Heart right ventricle (tissue), 16 donors: ENCODE measurements at regions of chr20 and their contacts with region 1.

Region 1: DNA sequence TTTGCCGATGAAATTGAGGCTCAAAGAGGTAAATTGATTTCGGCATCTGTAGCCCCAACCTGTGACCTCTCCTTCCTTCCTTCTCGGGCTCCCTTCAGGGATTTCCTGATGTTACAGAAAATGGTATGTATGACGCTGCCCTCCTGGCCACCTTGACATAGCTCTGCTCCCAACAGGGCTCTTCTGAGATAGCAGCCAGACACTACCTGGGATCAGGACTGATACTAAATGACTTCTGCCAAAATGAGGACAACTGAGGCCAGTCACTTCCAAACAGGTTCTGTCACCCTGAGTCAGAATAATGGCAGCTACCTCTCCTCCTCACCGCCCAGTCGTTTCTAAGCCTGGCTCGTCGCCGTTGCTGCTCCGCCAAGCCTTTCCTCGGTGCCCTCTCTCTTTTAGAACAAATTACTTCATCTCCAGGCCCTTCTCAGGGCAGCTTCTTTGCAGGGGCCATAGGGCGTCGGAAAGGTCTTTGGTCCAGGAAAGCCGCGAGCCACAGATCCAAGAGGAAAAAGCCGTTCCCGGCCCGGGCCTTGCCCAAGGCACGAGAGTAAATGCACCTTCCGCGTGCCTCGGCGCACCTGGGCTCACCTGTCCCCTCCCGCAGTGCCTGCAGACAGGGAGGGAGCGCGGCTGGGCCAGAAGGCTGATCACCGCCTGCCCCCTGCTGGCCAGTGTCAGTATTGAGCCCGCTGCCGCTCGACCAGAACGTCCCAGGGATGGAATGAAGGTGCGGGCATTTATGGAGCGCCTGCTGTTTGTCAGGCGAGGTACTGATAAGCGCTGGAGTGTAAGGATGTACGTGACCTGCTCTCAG is 904 bp upstream of the LPIN3 start:
- DNase-seq: peak; percentile 85 to 86
- ATAC-seq: peak; percentile 69 to 89 (median 84)
- H3K4me3 ChIP-seq: peak overlapping the region in 9 of 10 donors; percentile 36 to 67 (median 59)
- H3K27ac ChIP-seq: peak overlapping the region; percentile 40 to 86 (median 80)
- H3K4me1 ChIP-seq: peaks cover 3 to 48% (median 25%) of the 10 kb centered on the region in 9 donors
- H3K27me3 ChIP-seq: peaks cover 0 to 11% (median 0%) of the 10 kb centered on the region in 7 donors
- CTCF ChIP-seq: peak; percentile 98 to 100 (median 99)

Region 2: GRCh38 chr20:40970201-40970600 is 369.5 kb before region 1 on chr20:
- intact Hi-C with region 1: loop called in 6 of 10 experiments (anchors 5 to 10 kb)
- DNase-seq: no peak
- ATAC-seq: no peak
- H3K4me3 ChIP-seq: no peak overlapping the region
- H3K27ac ChIP-seq: no peak overlapping the region
- H3K4me1 ChIP-seq: peaks cover 0 to 10% (median 0%) of the 10 kb centered on the region in 9 donors
- H3K27me3 ChIP-seq: peaks cover 0 to 23% (median 0%) of the 10 kb centered on the region in 7 donors
- CTCF ChIP-seq: no peak

Region 3: GRCh38 chr20:41136680-41137613 is 202.8 kb before region 1 on chr20 and contains the start of gene PLCG1:
- intact Hi-C with region 1: loop called in 6 of 10 experiments (anchors 2 to 10 kb)
- DNase-seq: peak; percentile 91 to 93
- ATAC-seq: peak; percentile 83 to 90 (median 86)
- H3K4me3 ChIP-seq: peak within 1 kb of the TSS; percentile 71 to 99 (median 94)
- H3K27ac ChIP-seq: peak within 1 kb of the TSS; percentile 90 to 100 (median 98)
- H3K4me1 ChIP-seq: peaks cover 21 to 58% (median 50%) of the 10 kb centered on the region in 9 donors
- H3K27me3 ChIP-seq: peaks cover 0 to 9% (median 0%) of the 10 kb centered on the region in 7 donors
- CTCF ChIP-seq: no peak
- total RNA-seq, gene PLCG1: 36.6 to 63.6 (median 47.9) TPM

Region 4: DNA sequence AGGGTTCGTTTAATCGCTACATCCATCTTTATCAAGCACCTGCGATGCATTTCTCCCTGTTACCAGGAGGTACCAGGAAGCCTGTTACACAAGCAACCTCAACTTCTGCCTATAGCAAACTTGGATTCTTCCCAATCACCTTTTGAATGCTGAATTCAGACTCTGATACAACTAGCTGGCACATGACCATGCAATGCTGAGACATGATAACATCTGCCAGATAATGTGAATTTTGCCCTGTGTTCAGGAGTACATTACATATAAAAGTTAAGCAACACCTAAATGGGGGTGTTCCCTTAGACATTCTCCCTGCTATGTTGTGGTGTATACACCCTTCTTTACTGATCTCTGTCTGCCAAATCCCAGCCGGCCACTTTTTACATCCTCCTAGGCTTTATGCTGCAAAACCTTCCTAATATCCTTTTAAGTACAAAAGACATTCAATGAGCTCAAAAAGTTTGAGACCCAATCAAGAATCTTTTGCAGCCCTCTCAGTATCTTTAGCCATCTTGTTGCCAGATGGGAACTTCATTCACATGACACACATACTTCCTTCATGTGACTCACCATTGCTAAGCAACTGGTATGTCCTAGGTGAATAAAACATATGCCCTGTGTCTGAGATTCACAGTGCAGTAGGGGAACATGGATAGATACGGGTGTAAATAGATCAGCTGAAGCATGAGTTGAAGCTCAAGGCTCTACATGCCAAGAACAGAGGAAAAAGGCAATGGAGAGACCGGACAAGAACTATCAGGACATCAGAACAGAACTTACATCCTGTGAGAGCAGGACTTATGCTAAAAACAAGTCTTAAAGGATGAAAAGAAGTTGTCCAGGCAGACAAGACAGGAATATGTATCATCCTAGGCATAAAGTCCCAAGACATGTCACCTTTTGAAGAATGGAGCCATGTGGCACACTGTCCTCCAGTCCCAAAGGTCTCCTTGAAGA is 106.5 kb before region 1 on chr20:
- intact Hi-C with region 1: loop called in 9 of 10 experiments (anchors 1 to 10 kb)
- DNase-seq: no peak
- ATAC-seq: peak; percentile 32 to 70 (median 55)
- H3K4me3 ChIP-seq: peak overlapping the region in 2 of 10 donors; percentile 26 to 34
- H3K27ac ChIP-seq: peak overlapping the region; percentile 63 to 88 (median 82)
- H3K4me1 ChIP-seq: peaks cover 24 to 74% (median 69%) of the 10 kb centered on the region in 9 donors
- H3K27me3 ChIP-seq: no peaks in the 10 kb centered on the region
- CTCF ChIP-seq: no peak

Region 5: GRCh38 chr20:41261790-41262717 is 77.7 kb before region 1 on chr20:
- intact Hi-C with region 1: loop called in 1 of 10 experiments (anchors 10 kb)
- DNase-seq: no peak
- ATAC-seq: peak in 1 of 8 donors; percentile 29
- H3K4me3 ChIP-seq: no peak overlapping the region
- H3K27ac ChIP-seq: peak overlapping the region in 3 of 10 donors; percentile 3 to 38 (median 18)
- H3K4me1 ChIP-seq: peaks cover 0 to 23% (median 6%) of the 10 kb centered on the region in 9 donors
- H3K27me3 ChIP-seq: no peaks in the 10 kb centered on the region
- CTCF ChIP-seq: no peak

Region 6: GRCh38 chr20:41308290-41308711 is 31.4 kb before region 1 on chr20:
- intact Hi-C with region 1: no loop called
- DNase-seq: no peak
- ATAC-seq: peak in 6 of 8 donors; percentile 17 to 49 (median 24)
- H3K4me3 ChIP-seq: no peak overlapping the region
- H3K27ac ChIP-seq: peak overlapping the region in 7 of 10 donors; percentile 15 to 77 (median 30)
- H3K4me1 ChIP-seq: peaks cover 2 to 77% (median 37%) of the 10 kb centered on the region in 9 donors
- H3K27me3 ChIP-seq: no peaks in the 10 kb centered on the region
- CTCF ChIP-seq: no peak

Region 7: DNA sequence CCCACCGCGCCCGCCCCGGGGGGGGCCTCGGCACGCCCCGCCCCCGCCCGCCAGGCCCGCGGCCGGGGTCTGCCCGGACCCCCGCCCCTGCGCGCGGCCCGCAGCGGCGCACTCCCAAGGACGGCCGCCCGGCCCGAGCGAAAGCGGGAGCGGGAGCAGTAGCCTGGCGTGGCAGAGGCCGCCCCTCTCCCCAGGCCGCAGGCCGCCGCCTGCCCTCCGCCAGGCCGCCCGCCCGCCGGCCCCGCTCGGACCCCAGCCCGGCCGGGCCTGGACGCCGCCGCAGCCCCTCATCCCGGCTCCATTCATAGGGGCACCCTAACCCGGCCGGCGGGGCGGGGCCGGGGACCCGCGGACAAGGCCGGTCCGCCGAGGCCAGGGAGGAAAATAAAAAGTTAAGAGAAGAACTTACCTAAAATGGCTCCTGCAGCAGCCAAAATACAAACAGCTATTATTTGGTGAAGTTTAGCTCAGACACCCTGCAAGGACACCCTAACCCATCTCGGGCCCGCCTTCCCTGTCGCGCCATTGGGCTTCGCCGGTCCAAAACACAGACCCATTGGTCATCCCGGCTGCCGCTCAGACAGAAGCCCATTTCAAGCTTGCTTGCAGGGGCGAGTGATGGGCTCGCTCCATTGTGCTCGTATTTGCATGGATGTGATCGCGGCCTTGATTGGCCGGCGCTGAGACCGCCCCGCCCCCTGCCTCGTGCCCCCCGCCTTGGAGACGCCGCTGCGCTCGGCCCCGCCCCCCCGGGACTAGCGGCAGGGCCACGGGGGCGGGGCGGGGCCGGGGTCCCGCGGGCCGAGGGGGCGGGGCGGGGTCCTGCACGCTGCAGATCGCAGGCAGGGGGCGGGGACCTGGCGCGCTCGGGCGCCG is 278.5 kb after region 1 on chr20 and contains the start of gene CHD6:
- intact Hi-C with region 1: loop called in 1 of 10 experiments (anchors 10 kb)
- DNase-seq: peak; percentile 100
- ATAC-seq: peak; percentile 99 to 100 (median 99)
- H3K4me3 ChIP-seq: peak within 1 kb of the TSS; percentile 59 to 94 (median 76)
- H3K27ac ChIP-seq: peak within 1 kb of the TSS; percentile 77 to 95 (median 86)
- H3K4me1 ChIP-seq: peaks cover 0 to 52% (median 34%) of the 10 kb centered on the region in 9 donors
- H3K27me3 ChIP-seq: no peaks in the 10 kb centered on the region
- CTCF ChIP-seq: no peak
- total RNA-seq, gene CHD6: 27.1 to 52.9 (median 41.0) TPM